Activated naive CD4-positive, alpha-beta T cell treated with anti-CD3 and anti-CD28 coated beads for 36 hours (primary cell): ENCODE measurements at regions of chr9 and their contacts with region 1.

Region 1: DNA sequence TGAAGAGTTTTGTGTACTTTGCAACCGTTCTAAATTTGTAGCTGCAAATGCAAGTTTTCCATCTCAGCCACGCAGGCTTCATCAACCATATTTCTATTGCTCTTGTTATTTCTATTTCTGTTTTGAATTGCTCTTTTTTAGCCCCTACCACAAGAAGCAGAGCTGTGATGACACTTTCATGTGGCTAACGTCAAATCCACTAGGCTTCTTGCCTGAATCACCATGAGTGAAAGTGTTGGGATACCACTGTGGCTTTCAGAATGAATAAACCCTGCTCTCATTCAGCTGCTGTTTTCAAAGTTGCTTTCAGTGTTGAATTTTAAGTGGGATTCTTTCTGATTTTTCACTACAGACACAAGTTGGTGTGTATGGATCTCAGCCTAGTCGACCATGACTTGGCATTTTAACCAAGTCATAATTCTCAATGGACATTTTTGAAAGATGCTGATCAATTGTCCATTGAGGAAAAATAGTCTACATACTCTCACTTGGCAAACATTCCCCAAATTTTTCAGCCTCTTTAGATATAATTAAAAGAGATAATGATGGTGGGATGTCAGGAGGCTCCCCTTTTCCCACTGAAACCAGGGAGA is 41.0 kb upstream of the MTAP start:
- DNase-seq: peak; percentile 60
- H3K4me3 Mint-ChIP-seq: no peak overlapping the region
- H3K27ac Mint-ChIP-seq: no peak overlapping the region
- H3K4me1 Mint-ChIP-seq: peaks cover 13% of the 10 kb centered on the region
- H3K27me3 Mint-ChIP-seq: peaks cover 29% of the 10 kb centered on the region

Region 2: GRCh38 chr9:21605489-21605931 is 155.9 kb before region 1 on chr9:
- CTCF ChIA-PET with region 1: no interaction called
- intact Hi-C with region 1: no loop called
- DNase-seq: no peak
- H3K4me3 Mint-ChIP-seq: no peak overlapping the region
- H3K27ac Mint-ChIP-seq: no peak overlapping the region
- H3K4me1 Mint-ChIP-seq: peaks cover 24% of the 10 kb centered on the region
- H3K27me3 Mint-ChIP-seq: no peaks in the 10 kb centered on the region

Region 3: DNA sequence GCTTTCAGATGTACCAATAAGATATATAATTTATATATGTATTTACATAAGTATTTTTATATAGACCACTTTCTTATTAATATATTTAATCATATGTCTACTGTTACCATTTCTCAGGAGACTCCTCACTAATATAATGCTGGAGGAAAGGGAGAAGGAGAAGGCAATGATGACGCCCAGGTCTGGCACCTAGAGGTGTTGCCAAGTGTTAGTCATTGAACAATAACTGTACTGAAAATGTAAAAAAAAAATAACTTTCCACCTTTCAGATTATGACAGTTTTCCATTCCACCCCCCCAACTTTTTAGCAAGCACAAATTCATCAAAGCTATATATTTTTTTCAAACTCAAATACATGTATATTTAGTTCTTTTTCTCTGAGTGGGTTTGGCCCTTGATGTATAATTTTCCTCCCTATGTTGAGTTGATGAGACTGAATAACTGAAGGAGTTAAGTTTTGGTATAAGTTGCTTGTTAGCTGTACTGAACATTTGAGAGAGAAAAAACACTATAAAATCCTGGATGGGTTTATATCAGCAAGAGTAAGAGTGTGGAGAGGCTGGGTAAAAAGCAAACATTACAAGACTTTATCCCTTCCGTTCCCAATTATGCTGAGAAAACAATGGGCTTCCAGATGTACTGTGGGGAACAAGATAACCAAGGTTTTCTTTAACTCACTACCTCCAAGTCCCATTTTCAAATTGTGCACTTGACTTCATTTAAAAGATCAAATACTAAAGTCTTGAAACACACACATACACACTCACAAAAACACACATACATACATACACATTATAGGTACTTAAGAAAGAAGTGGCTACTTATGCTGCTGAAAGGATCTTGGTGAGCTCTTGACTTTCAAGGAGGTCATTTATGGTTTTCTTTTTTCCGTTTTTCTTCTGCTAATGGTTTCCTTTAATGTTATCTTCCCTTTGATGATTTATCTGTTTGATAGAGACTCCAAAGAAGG is 136.4 kb before region 1 on chr9:
- CTCF ChIA-PET with region 1: no interaction called
- intact Hi-C with region 1: loop called (anchors 2 kb)
- DNase-seq: peak; percentile 26
- H3K4me3 Mint-ChIP-seq: no peak overlapping the region
- H3K27ac Mint-ChIP-seq: peak overlapping the region; percentile 42
- H3K4me1 Mint-ChIP-seq: peaks cover 34% of the 10 kb centered on the region
- H3K27me3 Mint-ChIP-seq: no peaks in the 10 kb centered on the region

Region 4: DNA sequence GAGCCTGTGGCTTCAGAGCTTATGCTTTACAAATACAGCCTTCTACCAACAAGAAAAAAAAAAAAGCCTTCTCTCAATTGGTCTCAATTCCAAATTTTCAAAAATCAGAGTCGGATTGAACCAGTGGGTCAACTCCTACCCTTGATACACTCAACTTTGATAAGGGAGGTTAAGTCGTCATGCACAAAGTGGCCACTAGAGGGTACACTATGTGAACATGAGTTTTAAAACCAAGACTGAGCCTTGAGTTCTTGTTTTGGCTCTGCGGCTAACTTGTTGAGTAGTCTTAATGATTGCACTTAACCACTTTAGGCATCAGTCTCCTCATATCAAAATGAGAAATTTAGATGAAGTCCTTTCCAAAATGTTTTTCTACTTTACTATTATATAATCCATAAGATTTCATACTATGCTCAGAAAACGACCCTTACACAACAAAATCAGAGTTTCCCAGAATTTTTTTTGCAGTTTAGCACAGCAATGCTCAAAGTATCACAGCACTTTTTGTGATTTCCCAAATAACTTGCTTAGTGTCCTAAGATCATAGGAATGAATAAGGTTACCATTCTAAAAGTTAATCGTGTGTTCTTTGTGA is 51.8 kb before region 1 on chr9:
- CTCF ChIA-PET with region 1: interaction called, 8 read pairs
- intact Hi-C with region 1: loop called (anchors 1 kb)
- DNase-seq: peak; percentile 86
- H3K4me3 Mint-ChIP-seq: no peak overlapping the region
- H3K27ac Mint-ChIP-seq: no peak overlapping the region
- H3K4me1 Mint-ChIP-seq: peaks cover 14% of the 10 kb centered on the region
- H3K27me3 Mint-ChIP-seq: no peaks in the 10 kb centered on the region

Region 5: GRCh38 chr9:21777701-21778100 is 16.3 kb after region 1 on chr9:
- CTCF ChIA-PET with region 1: no interaction called
- intact Hi-C with region 1: loop called (anchors 2 kb)
- DNase-seq: no peak
- H3K4me3 Mint-ChIP-seq: no peak overlapping the region
- H3K27ac Mint-ChIP-seq: no peak overlapping the region
- H3K4me1 Mint-ChIP-seq: peaks cover 3% of the 10 kb centered on the region
- H3K27me3 Mint-ChIP-seq: no peaks in the 10 kb centered on the region

Region 6: GRCh38 chr9:21854594-21854993 is 93.2 kb after region 1 on chr9:
- CTCF ChIA-PET with region 1: no interaction called
- intact Hi-C with region 1: no loop called
- DNase-seq: no peak
- H3K4me3 Mint-ChIP-seq: no peak overlapping the region
- H3K27ac Mint-ChIP-seq: no peak overlapping the region
- H3K4me1 Mint-ChIP-seq: peaks cover 5% of the 10 kb centered on the region
- H3K27me3 Mint-ChIP-seq: no peaks in the 10 kb centered on the region

Region 7: DNA sequence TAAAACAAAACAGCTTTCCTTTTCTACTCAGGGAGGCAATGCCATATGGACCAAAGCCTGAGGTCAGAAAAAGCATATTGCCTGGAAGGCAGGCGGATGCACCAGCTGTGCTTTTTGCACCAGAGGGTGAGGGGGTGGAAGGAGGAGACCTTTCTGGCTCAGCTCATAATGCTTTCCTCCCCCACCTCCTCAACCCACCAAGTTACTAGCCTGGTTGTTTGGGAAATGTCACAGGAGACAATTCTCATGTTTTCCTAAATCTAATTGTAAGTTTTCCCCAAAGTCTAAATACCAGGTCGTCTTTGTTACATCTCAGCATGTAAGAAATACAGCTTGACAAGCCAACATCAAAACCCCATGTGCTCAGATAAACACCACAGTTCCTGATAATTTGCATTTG is 612.6 kb after region 1 on chr9:
- CTCF ChIA-PET with region 1: no interaction called
- intact Hi-C with region 1: no loop called
- DNase-seq: no peak
- H3K4me3 Mint-ChIP-seq: no peak overlapping the region
- H3K27ac Mint-ChIP-seq: no peak overlapping the region
- H3K4me1 Mint-ChIP-seq: no peaks in the 10 kb centered on the region
- H3K27me3 Mint-ChIP-seq: peaks cover 4% of the 10 kb centered on the region